ENCODE measurements at regions of chrX and their contacts with region 1.

Region 1: DNA sequence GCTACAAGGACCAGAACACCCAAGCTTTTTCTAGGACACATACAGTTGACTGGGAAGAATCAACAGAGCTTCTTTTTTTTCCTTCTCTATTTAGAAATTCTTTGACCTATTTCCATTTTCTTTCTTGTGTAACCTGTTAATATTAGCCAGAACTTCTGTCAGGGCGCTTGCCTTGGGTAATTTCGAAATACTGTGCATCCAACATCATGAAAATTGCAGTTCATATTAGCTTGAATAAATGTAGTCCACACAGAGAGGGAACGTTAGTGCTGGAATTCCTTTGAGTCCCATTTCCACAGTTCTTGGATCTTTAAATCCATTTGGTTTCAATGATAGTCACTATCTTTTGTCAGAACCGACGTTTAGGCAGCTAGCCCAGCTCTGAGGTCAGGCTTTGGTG is 141.8 kb downstream of the MXRA5 start:
- DNase-seq: no peak
- H3K4me3 ChIP-seq: no peak overlapping the region
- H3K27ac ChIP-seq: no peak overlapping the region
- H3K4me1 ChIP-seq: no peaks in the 10 kb centered on the region
- H3K27me3 ChIP-seq: no peaks in the 10 kb centered on the region
- CTCF ChIP-seq: no peak

Region 2: GRCh38 chrX:3076416-3076991 is 128.1 kb before region 1 on chrX:
- CTCF ChIA-PET with region 1: no interaction called
- dilution Hi-C with region 1: no loop called
- in situ Hi-C with region 1: no loop called
- intact Hi-C with region 1: no loop called
- DNase-seq: no peak
- H3K4me3 ChIP-seq: no peak overlapping the region
- H3K27ac ChIP-seq: no peak overlapping the region
- H3K4me1 ChIP-seq: no peaks in the 10 kb centered on the region
- H3K27me3 ChIP-seq: no peaks in the 10 kb centered on the region
- CTCF ChIP-seq: no peak

Region 3: DNA sequence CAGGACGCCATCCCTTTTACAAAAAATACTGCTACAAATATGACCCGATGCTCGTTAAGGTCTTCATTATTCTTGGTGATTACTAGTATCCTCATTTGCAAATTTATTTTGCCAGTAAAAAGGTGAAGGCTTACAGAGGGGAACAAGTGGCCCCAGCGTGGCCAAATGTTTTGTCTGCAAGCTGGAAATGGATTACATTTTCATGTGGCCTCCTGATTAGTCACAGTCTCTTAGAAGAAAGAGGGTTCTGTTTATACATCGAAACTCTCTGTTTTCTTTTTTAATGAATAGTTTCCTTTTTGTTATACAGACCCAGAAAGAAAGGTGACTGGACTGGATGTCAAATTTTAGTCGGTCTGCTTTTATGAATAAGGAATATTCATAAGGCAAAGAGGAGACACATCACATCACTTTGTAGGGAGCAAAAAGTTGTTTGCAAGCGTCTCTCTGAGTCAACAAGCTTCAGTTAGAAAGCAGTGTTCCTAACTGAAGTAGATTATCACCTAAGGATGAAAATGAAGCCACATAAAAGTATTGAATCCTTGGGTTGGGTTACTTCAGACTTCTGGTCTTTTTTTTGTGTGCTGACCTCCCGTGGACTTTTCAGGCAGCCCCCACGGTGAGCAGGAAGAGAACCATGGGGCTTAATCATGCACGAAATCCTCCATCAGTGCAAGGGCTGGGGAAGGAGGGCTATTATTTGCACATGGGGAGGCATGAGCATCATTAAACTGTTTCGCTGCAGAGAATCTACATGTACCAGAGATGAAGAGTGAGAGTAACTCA is 37.7 kb before region 1 on chrX:
- CTCF ChIA-PET with region 1: no interaction called
- dilution Hi-C with region 1: loop called (anchors 5 kb)
- in situ Hi-C with region 1: no loop called
- intact Hi-C with region 1: no loop called
- DNase-seq: no peak
- H3K4me3 ChIP-seq: no peak overlapping the region
- H3K27ac ChIP-seq: no peak overlapping the region
- H3K4me1 ChIP-seq: no peaks in the 10 kb centered on the region
- H3K27me3 ChIP-seq: no peaks in the 10 kb centered on the region
- CTCF ChIP-seq: no peak

Measured in mammary epithelial cell (primary cell).